Transverse colon (tissue), 4 donors: ENCODE measurements at regions of chr14 and their contacts with region 1.

Region 1: DNA sequence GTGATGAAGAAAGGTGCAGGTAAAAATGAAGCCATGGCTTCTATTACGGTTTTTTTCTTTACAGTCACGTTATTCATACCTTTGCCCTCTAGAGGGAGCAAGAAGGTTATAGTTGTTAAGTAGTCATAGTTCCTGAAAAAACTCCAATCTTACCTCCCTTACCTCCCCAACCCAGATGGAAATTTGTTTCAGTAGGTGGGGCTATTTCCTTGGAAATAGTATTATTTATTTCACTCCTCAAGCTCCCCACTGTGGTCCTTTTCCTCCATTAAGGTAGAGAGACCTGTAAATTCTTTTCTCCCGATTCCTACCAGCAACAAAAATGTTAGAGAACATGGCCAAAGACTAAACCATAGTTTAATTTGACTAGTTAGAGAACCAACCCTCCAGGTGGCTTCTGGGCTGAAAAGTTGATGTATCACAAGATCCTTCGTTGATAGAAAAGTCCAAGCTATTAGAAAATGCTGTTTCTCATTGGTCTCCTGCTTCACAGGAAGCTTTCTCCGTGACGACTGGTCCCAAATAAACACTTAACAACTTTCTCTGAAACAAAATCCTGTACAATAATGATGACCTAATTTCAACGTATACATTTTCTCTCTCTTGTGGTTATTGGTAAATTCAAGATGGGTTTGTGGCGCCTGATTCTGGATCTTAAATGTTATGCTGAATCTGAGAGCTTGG is 43.5 kb downstream of the TMX1 start:
- DNase-seq: no peak
- H3K4me3 ChIP-seq: no peak overlapping the region
- H3K27ac ChIP-seq: no peak overlapping the region
- H3K4me1 ChIP-seq: peaks cover 0 to 5% (median 0%) of the 10 kb centered on the region in 4 donors
- H3K27me3 ChIP-seq: no peaks in the 10 kb centered on the region
- CTCF ChIP-seq: peak; percentile 70 to 86 (median 73)
- EP300 ChIP-seq: no peak
- POLR2A ChIP-seq: no peak

Region 2: DNA sequence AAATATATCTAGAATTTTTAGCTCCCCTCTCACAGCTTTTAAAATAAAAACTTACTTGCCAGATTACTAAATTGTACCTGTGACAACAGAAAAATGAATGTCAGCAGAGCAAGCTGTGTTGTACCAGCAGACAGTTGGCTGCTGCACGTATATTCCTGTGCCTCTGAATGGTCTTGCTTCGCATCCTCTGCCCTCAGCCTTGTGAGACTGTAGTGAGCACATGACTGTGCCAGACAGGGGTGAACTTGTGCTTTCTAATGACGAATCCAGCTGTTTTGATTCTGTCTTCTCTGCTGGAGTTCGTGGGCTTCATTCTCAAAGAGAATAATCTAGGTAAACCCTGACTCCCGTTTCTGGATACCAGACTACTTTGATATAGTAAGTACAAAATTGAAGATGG is 309.9 kb after region 1 on chr14:
- in situ Hi-C with region 1: no loop called
- intact Hi-C with region 1: no loop called
- DNase-seq: no peak
- H3K4me3 ChIP-seq: no peak overlapping the region
- H3K27ac ChIP-seq: no peak overlapping the region
- H3K4me1 ChIP-seq: no peaks in the 10 kb centered on the region
- H3K27me3 ChIP-seq: no peaks in the 10 kb centered on the region
- CTCF ChIP-seq: no peak
- EP300 ChIP-seq: no peak
- POLR2A ChIP-seq: no peak

Region 3: DNA sequence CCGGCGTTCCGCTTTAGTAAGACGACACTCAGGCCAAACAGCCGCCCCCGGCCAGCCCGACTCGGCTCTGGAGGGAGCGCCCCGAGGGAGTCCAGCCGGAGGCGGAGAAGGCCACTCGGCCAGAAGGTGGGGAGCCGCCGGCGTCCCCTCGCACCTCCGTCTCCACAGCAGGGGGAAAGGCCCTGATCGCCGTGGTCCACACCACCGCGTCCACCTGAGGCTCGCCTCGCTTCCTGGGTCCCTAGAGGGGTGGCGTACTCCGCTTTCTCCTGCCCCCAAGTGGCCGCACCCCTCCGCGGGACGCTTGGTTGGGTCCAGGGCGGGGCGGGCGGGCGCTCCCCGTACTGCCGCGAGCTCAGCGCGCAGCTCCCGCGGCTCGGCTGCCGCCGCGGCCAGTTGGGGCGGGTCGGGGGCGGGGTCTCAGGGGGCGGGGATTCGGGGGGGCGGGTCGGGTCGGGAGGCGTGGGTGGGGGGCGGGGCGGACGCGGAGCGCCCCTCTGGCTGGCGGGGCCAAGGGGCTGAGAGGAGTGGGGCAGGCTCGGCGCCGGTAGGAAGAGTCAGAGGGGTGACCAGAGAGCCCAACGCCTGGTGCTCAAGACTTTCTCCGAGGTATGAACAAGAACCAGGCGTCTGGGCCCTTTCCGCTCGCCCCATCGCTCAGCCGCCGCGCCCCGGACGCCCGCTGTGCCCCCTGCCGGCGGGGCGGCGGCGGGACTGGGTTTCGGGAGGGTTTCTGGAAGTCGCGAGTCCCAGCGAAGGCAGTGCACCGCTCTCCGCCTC is 368.0 kb after region 1 on chr14 and contains the start of gene FRMD6:
- in situ Hi-C with region 1: no loop called
- intact Hi-C with region 1: loop called (anchors 10 kb)
- DNase-seq: peak; percentile 86
- H3K4me3 ChIP-seq: peak within 1 kb of the TSS; percentile 67 to 99 (median 93)
- H3K27ac ChIP-seq: peak within 1 kb of the TSS; percentile 91 to 97 (median 94)
- H3K4me1 ChIP-seq: peaks cover 0 to 33% (median 9%) of the 10 kb centered on the region in 4 donors
- H3K27me3 ChIP-seq: peaks cover 37% of the 10 kb centered on the region
- CTCF ChIP-seq: peak; percentile 71 to 85 (median 79)
- EP300 ChIP-seq: no peak
- POLR2A ChIP-seq: peak; percentile 65
- total RNA-seq, gene FRMD6: 8.4 to 21.7 (median 11.7) TPM